Heart right ventricle (tissue), 16 donors: ENCODE measurements at regions of chr11 and their contacts with region 1.

Region 1: GRCh38 chr11:47355283-47356128 is 3.0 kb upstream of the MYBPC3 start:
- DNase-seq: peak; percentile 95 to 97
- ATAC-seq: peak; percentile 35 to 63 (median 56)
- H3K4me3 ChIP-seq: peak overlapping the region; percentile 32 to 63 (median 47)
- H3K27ac ChIP-seq: peak overlapping the region; percentile 81 to 99 (median 94)
- H3K4me1 ChIP-seq: peaks cover 0 to 26% (median 4%) of the 10 kb centered on the region in 9 donors
- H3K27me3 ChIP-seq: no peaks in the 10 kb centered on the region
- CTCF ChIP-seq: peak; percentile 85 to 98 (median 94)

Region 2: GRCh38 chr11:47152953-47153950 is 202.3 kb before region 1 on chr11:
- intact Hi-C with region 1: no loop called
- DNase-seq: peak; percentile 77 to 80
- ATAC-seq: peak; percentile 54 to 85 (median 78)
- H3K4me3 ChIP-seq: no peak overlapping the region
- H3K27ac ChIP-seq: peak overlapping the region in 1 of 10 donors; percentile 58
- H3K4me1 ChIP-seq: peaks cover 4 to 34% (median 18%) of the 10 kb centered on the region in 9 donors
- H3K27me3 ChIP-seq: no peaks in the 10 kb centered on the region
- CTCF ChIP-seq: peak; percentile 87 to 97 (median 94)

Region 3: GRCh38 chr11:47176328-47177228 is 178.9 kb before region 1 on chr11 and contains the start of gene ARFGAP2:
- intact Hi-C with region 1: loop called in 9 of 10 experiments (anchors 2 to 10 kb)
- DNase-seq: peak; percentile 96 to 97
- ATAC-seq: peak; percentile 87 to 96 (median 92)
- H3K4me3 ChIP-seq: peak within 1 kb of the TSS; percentile 75 to 100 (median 90)
- H3K27ac ChIP-seq: peak within 1 kb of the TSS; percentile 92 to 100 (median 98)
- H3K4me1 ChIP-seq: peaks cover 33 to 89% (median 73%) of the 10 kb centered on the region in 9 donors
- H3K27me3 ChIP-seq: no peaks in the 10 kb centered on the region
- CTCF ChIP-seq: no peak
- total RNA-seq, gene ARFGAP2: 55.7 to 69.7 (median 62.9) TPM

Region 4: GRCh38 chr11:47233989-47234668 is 121.4 kb before region 1 on chr11:
- intact Hi-C with region 1: loop called in 4 of 10 experiments (anchors 2 to 10 kb)
- DNase-seq: peak; percentile 25 to 52
- ATAC-seq: peak; percentile 63 to 81 (median 74)
- H3K4me3 ChIP-seq: peak overlapping the region in 3 of 10 donors; percentile 2 to 13 (median 8)
- H3K27ac ChIP-seq: peak overlapping the region in 9 of 10 donors; percentile 47 to 73 (median 58)
- H3K4me1 ChIP-seq: peaks cover 5 to 33% (median 22%) of the 10 kb centered on the region in 9 donors
- H3K27me3 ChIP-seq: no peaks in the 10 kb centered on the region
- CTCF ChIP-seq: peak in 8 of 9 donors; percentile 18 to 59 (median 48)

Region 5: GRCh38 chr11:47269002-47269828 is 86.3 kb before region 1 on chr11:
- intact Hi-C with region 1: loop called in 6 of 10 experiments (anchors 5 to 10 kb)
- DNase-seq: peak; percentile 90 to 91
- ATAC-seq: peak; percentile 89 to 95 (median 92)
- H3K4me3 ChIP-seq: peak overlapping the region; percentile 54 to 91 (median 82)
- H3K27ac ChIP-seq: peak overlapping the region; percentile 92 to 99 (median 98)
- H3K4me1 ChIP-seq: peaks cover 10 to 61% (median 49%) of the 10 kb centered on the region in 9 donors
- H3K27me3 ChIP-seq: no peaks in the 10 kb centered on the region
- CTCF ChIP-seq: peak in 4 of 9 donors; percentile 13 to 29 (median 20)